HCT116 (cell line): ENCODE measurements at regions of chr6 and their contacts with region 1.

Region 1: GRCh38 chr6:105087571-105088211 is 92.1 kb downstream of the POPDC3 start:
- DNase-seq: peak; percentile 41
- ATAC-seq: peak; percentile 83
- H3K4me3 ChIP-seq: no peak overlapping the region
- H3K27ac ChIP-seq: no peak overlapping the region
- H3K4me1 ChIP-seq: no peaks in the 10 kb centered on the region
- H3K27me3 ChIP-seq: no peaks in the 10 kb centered on the region
- CTCF ChIP-seq: peak; percentile 68 to 86 (median 83)
- POLR2A ChIP-seq: no peak
- RAD21 ChIP-seq: peak; percentile 96

Region 2: GRCh38 chr6:105069821-105070445 is 17.8 kb before region 1 on chr6:
- CTCF ChIA-PET with region 1: no interaction called
- POLR2A ChIA-PET with region 1: no interaction called
- RAD21 ChIA-PET with region 1: no interaction called
- intact Hi-C with region 1: no loop called
- DNase-seq: no peak
- ATAC-seq: no peak
- H3K4me3 ChIP-seq: no peak overlapping the region
- H3K27ac ChIP-seq: no peak overlapping the region
- H3K4me1 ChIP-seq: peaks cover 4 to 6% of the 10 kb centered on the region in 2 experiments; a peak in 3 of 4 replicates
- H3K27me3 ChIP-seq: no peaks in the 10 kb centered on the region
- CTCF ChIP-seq: no peak
- POLR2A ChIP-seq: no peak
- RAD21 ChIP-seq: no peak

Region 3: GRCh38 chr6:105270511-105270910 is 182.8 kb after region 1 on chr6:
- CTCF ChIA-PET with region 1: interaction called, 5 read pairs
- POLR2A ChIA-PET with region 1: no interaction called
- RAD21 ChIA-PET with region 1: no interaction called
- intact Hi-C with region 1: loop called (anchors 2 kb)
- DNase-seq: no peak
- ATAC-seq: no peak
- H3K4me3 ChIP-seq: no peak overlapping the region
- H3K27ac ChIP-seq: no peak overlapping the region
- H3K4me1 ChIP-seq: no peaks in the 10 kb centered on the region; a peak in 1 of 4 replicates
- H3K27me3 ChIP-seq: no peaks in the 10 kb centered on the region
- CTCF ChIP-seq: no peak
- POLR2A ChIP-seq: no peak
- RAD21 ChIP-seq: no peak

Region 4: GRCh38 chr6:105363100-105363754 is 275.5 kb after region 1 on chr6:
- CTCF ChIA-PET with region 1: interaction called, 39 read pairs
- POLR2A ChIA-PET with region 1: no interaction called
- RAD21 ChIA-PET with region 1: interaction called, 6 to 9 read pairs
- intact Hi-C with region 1: loop called (anchors 1 kb)
- DNase-seq: no peak
- ATAC-seq: no peak
- H3K4me3 ChIP-seq: no peak overlapping the region
- H3K27ac ChIP-seq: no peak overlapping the region
- H3K4me1 ChIP-seq: peaks cover 0 to 12% of the 10 kb centered on the region in 2 experiments; a peak in 2 of 4 replicates
- H3K27me3 ChIP-seq: no peaks in the 10 kb centered on the region
- CTCF ChIP-seq: peak; percentile 36 to 69 (median 53); a peak in 4 of 6 replicates
- POLR2A ChIP-seq: no peak
- RAD21 ChIP-seq: peak; percentile 76

Region 5: GRCh38 chr6:105402939-105403935 is 315.5 kb after region 1 on chr6 and contains the start of gene PREP:
- CTCF ChIA-PET with region 1: interaction called, 8 read pairs
- POLR2A ChIA-PET with region 1: no interaction called
- RAD21 ChIA-PET with region 1: interaction called in 1 of 2 experiments, 4 read pairs
- intact Hi-C with region 1: loop called (anchors 1 kb)
- DNase-seq: peak; percentile 72
- ATAC-seq: peak; percentile 92
- H3K4me3 ChIP-seq: peak within 1 kb of the TSS; percentile 82 to 94
- H3K27ac ChIP-seq: peak within 1 kb of the TSS; percentile 84
- H3K4me1 ChIP-seq: peaks cover 6 to 20% of the 10 kb centered on the region in 2 experiments; a peak in 3 of 4 replicates
- H3K27me3 ChIP-seq: no peaks in the 10 kb centered on the region
- CTCF ChIP-seq: peak; percentile 67 to 88 (median 81); a peak in 5 of 6 replicates
- POLR2A ChIP-seq: no peak
- RAD21 ChIP-seq: peak; percentile 58
- total RNA-seq, gene PREP: 53.5 TPM

Region 6: DNA sequence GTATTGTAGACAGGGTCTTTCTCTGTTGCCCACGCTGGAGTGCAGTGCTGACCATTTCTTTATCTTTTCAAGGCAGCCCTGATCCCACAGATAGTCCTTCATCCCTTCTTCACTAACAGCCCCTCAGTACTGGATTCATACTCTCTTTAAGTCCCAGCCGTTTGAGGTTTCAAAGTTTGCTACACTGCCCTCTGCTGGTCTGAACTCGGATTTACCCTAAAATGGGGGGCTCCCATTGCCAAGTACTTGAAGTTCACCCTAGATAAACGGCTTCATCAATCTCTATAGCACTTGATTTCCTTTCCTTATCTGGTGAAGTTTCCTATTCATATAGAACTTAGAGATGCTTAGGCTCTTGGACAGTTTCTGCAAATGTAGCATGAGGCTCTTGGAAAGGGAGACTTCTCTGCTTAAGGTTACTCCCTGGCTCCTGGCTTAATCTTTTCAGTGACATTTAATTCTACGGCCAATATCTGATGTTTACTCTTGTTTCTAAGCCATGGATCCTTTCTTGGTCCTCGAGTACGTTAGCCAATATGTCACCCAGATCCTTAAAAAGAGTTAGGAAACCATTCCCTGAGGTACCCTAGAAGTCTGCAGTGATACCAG is 336.6 kb after region 1 on chr6:
- CTCF ChIA-PET with region 1: interaction called, 10 read pairs
- POLR2A ChIA-PET with region 1: no interaction called
- RAD21 ChIA-PET with region 1: no interaction called
- intact Hi-C with region 1: loop called (anchors 1 kb)
- DNase-seq: peak; percentile 62
- ATAC-seq: peak; percentile 82
- H3K4me3 ChIP-seq: no peak overlapping the region
- H3K27ac ChIP-seq: no peak overlapping the region
- H3K4me1 ChIP-seq: peaks cover 12 to 14% of the 10 kb centered on the region in 2 experiments; a peak in 3 of 4 replicates
- H3K27me3 ChIP-seq: no peaks in the 10 kb centered on the region
- CTCF ChIP-seq: peak; percentile 58 to 82 (median 62); a peak in 5 of 6 replicates
- POLR2A ChIP-seq: no peak
- RAD21 ChIP-seq: peak; percentile 63

Region 7: GRCh38 chr6:106300944-106301343 is 1213.3 kb after region 1 on chr6:
- CTCF ChIA-PET with region 1: no interaction called
- POLR2A ChIA-PET with region 1: no interaction called
- RAD21 ChIA-PET with region 1: no interaction called
- intact Hi-C with region 1: loop called (anchors 5 kb)
- DNase-seq: no peak
- ATAC-seq: peak; percentile 53; the same call in 1 of the 2 replicates
- H3K4me3 ChIP-seq: no peak overlapping the region
- H3K27ac ChIP-seq: no peak overlapping the region
- H3K4me1 ChIP-seq: peaks cover 0 to 7% of the 10 kb centered on the region in 2 experiments; a peak in 1 of 4 replicates
- H3K27me3 ChIP-seq: no peaks in the 10 kb centered on the region
- CTCF ChIP-seq: peak; percentile 42 to 51 (median 46); a peak in 5 of 6 replicates
- POLR2A ChIP-seq: no peak
- RAD21 ChIP-seq: peak; percentile 68